Ovary (tissue), 10 donors: ENCODE measurements at regions of chr16 and their contacts with region 1.

Region 1: GRCh38 chr16:50403491-50403890 is 34.7 kb upstream of the BRD7 start:
- DNase-seq: no peak
- H3K4me3 ChIP-seq: no peak overlapping the region
- H3K27ac ChIP-seq: no peak overlapping the region
- H3K4me1 ChIP-seq: no peaks in the 10 kb centered on the region
- H3K27me3 ChIP-seq: no peaks in the 10 kb centered on the region
- CTCF ChIP-seq: no peak
- EP300 ChIP-seq: no peak
- POLR2A ChIP-seq: no peak

Region 2: DNA sequence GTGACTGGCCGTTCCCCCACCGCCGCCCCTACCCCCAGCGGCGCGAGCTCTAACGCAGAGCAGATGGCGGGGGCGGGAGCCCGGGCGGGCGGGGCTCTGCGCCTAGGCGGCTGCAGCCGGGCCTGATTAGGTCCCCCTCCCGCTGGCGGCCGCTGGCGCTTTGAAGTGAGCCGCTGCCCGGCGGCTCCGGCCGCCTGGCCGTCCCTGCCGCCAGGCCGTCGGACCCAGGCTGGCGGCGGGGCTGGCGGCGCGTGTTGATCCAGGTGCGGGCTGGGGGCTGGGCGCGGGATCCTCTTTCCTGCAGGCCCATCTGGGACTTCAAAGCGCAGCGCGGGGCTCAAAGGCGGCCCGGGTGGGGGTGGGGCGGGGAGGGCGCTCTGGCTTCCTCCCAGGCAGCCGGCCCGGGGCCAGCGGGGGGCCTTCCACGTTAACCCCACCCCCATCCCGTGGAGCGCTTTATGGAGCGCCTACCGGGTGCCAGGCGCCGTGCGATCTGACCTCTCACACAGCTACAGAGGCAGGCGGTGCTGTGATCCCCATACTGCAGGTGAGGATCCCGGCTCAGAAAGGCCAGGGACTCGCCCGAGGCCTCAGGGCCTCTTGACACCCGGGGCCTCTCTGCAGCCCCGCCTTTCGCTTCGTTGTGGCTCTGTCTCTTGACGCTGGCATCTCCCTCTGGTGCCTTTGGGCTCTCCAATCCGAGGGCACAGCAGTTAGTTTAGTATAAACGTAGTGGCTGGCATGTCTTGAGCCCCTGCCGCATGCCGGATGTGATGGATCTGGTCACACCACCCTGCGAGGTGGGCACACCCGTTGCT is 64.7 kb after region 1 on chr16:
- intact Hi-C with region 1: loop called in 1 of 4 experiments (anchors 10 kb)
- DNase-seq: peak in 3 of 5 donors; percentile 23 to 40 (median 24)
- H3K4me3 ChIP-seq: peak overlapping the region; percentile 0
- H3K27ac ChIP-seq: no peak overlapping the region
- H3K4me1 ChIP-seq: no peaks in the 10 kb centered on the region
- H3K27me3 ChIP-seq: no peaks in the 10 kb centered on the region
- CTCF ChIP-seq: no peak
- EP300 ChIP-seq: no peak
- POLR2A ChIP-seq: no peak